ENCODE measurements at regions of chr3 and their contacts with region 1.

Region 1: DNA sequence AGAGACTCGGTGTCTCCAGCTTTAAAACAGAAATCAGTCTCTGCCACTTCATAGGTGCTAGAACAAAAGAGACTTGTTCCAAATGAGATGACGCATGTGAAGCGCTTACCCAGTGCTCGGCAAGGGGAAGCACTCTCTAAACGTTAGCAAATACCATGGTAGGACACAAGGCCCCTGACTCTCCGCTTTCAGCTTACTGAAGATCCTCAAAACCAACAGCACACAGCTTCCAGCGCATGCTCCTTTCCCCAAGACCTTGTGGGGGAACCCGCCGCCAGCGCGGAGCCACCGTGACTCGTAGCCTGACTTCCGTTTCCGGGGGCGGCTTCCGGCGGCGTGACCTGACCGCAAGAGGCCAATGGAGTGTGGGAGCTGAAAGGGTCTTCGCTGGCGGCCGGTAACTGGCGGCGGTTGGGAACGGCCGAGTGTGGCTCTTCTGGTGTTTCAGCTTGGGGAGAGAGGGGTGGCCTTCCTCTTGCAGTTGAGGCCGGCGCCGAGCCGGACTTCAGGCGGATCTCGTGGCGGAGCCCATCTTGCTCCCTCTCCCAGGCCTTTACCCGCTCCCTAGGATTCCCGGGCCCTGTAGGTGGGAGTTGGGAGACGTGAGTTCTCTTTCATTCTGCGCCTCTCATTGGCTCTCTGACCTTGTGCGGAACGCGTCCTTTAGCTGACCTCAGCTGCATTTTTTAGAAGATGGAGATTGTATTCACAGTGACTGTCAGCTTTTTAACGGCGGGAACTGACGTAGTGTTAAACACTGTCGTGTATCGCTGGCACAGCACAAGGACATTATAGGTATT is at the start of gene THUMPD3:
- DNase-seq: peak; percentile 92 to 94
- ATAC-seq: peak; percentile 96
- total RNA-seq, gene THUMPD3: 28.6 to 47.2 TPM

Region 2: GRCh38 chr3:9147215-9147895 is 215.6 kb before region 1 on chr3:
- intact Hi-C with region 1: no loop called
- DNase-seq: no peak
- ATAC-seq: no peak

Region 3: GRCh38 chr3:9214599-9214998 is 148.3 kb before region 1 on chr3:
- intact Hi-C with region 1: no loop called
- DNase-seq: no peak
- ATAC-seq: no peak

Region 4: DNA sequence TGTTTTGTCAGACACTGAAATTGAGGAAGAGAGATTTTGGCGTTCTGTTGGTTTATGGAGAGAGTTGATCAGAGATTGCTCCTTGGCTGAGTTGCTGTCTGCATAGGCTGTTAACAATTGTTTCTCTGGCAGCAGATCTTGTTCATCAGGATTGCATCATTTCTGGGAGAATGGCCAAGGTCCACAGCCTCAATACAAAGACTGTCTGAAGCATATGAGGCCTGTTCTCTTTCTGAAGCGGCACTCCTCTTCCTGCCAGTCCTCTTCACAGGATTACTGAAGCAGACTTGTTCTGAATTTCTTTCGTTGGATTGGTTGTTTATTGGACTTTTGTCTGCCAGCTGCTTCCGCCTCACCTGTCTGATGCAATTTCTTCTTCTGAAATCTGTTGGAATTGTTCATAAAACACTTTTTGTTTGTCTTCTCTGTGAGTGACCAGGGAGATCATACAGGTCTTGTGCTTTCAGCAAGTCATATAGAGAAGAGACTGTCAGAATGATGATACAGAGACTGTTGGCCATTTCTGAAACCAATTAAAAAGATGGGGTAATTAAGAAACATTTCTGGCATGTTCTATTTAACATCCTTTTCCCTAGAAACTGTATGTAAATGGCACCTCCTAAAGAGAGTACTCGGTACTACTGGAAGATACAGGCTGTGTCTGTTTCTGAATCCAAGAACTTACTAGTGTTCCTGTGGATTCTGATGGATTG is 59.9 kb after region 1 on chr3:
- intact Hi-C with region 1: loop called in 1 of 2 experiments (anchors 5 kb)
- DNase-seq: peak; percentile 74 to 90
- ATAC-seq: peak; percentile 95